ENCODE measurements at regions of chr11 and their contacts with region 1.

Region 1: DNA sequence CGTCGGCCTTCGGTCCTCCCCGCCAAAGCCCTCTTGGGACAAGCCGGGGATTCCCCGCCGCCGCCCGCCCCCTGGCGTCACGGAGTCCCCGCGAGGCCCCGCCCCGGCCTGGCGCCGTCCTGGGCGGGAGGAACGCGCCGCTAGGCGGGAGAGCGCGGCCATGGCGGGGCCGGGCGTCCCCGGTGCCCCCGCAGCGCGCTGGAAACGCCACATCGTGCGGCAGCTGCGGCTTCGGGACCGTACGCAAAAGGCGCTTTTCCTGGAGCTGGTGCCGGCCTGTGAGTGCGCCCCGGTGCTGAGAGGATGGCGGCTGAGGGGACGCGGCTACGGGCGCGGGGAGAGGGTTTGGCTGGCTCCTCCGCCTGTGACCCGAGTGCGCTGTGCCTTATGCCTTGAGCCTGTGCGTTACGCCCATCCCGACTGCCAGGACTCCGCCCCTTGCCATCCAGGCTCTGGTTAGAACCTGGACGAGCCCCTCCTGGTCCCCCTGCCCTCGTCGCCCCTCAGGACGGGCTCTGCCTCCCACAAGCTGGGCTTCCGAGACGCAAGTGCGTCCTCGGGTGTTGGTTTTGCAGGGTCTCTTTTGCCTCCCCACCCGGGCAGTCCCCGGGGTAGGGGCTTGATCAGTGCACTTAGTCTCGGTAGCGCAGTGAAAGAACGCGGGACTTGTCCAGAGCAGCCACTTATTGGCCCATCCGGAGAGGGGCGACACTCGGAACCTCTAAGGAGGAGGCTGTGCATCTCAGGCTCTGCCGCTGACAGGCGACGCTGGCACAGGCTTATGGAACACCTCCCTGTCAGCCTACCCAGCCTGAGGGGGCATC is at the start of gene ATG16L2:
- DNase-seq: peak in 8 of 9 donors; percentile 53 to 96 (median 92)
- ATAC-seq: peak; percentile 89
- H3K4me3 ChIP-seq: peak within 1 kb of the TSS; percentile 89
- H3K4me3 Mint-ChIP-seq: peak within 1 kb of the TSS; percentile 97 to 99 (median 98)
- H3K27ac ChIP-seq: peak within 1 kb of the TSS; percentile 100
- H3K27ac Mint-ChIP-seq: peak within 1 kb of the TSS; percentile 86 to 99 (median 98)
- H3K4me1 ChIP-seq: peaks cover 18 to 23% of the 10 kb centered on the region in 2 donors
- H3K4me1 Mint-ChIP-seq: peaks cover 31 to 67% (median 52%) of the 10 kb centered on the region in 7 donors
- H3K27me3 ChIP-seq: no peaks in the 10 kb centered on the region
- H3K27me3 Mint-ChIP-seq: no peaks in the 10 kb centered on the region
- total RNA-seq, gene ATG16L2: 99.5 to 199 (median 166) TPM

Region 2: DNA sequence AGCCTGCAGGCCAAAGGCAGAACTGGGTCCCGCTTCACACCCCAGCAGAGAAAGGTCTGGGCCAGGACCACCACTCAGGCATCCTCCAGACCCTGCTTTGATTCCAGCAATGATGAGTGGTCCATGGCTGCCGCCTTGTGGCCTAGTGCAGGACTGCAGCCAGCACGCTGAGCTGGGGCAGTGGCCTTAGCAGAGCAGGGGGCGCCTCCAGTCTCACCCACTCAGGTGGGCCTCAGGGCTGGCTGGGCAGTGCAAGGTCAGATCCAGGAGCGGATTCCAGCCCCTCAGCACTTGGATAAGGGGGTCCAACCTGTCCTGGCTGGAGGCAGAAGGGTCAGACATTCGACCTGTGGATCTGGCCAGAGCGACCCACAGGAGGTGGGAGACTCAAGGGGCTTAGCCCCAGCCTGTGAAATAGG is 130.7 kb before region 1 on chr11:
- CTCF ChIA-PET with region 1: no interaction called
- POLR2A ChIA-PET with region 1: no interaction called
- intact Hi-C with region 1: loop called in 1 of 2 experiments (anchors 2 kb)
- DNase-seq: peak; percentile 36 to 75 (median 56)
- ATAC-seq: peak; percentile 77
- H3K4me3 ChIP-seq: no peak overlapping the region
- H3K4me3 Mint-ChIP-seq: no peak overlapping the region
- H3K27ac ChIP-seq: no peak overlapping the region
- H3K27ac Mint-ChIP-seq: peak overlapping the region in 3 of 9 donors; percentile 59 to 74 (median 61)
- H3K4me1 ChIP-seq: no peaks in the 10 kb centered on the region
- H3K4me1 Mint-ChIP-seq: peaks cover 7 to 46% (median 16%) of the 10 kb centered on the region in 7 donors
- H3K27me3 ChIP-seq: no peaks in the 10 kb centered on the region
- H3K27me3 Mint-ChIP-seq: peaks cover 0 to 11% (median 0%) of the 10 kb centered on the region in 5 donors

Region 3: GRCh38 chr11:72781313-72782050 is 33.0 kb before region 1 on chr11:
- CTCF ChIA-PET with region 1: interaction called, 3 read pairs
- POLR2A ChIA-PET with region 1: interaction called, 3 read pairs
- intact Hi-C with region 1: loop called (anchors 1 kb)
- DNase-seq: peak; percentile 39 to 68 (median 49)
- ATAC-seq: peak; percentile 92
- H3K4me3 ChIP-seq: peak overlapping the region; percentile 52
- H3K4me3 Mint-ChIP-seq: peak overlapping the region; percentile 73 to 89 (median 84)
- H3K27ac ChIP-seq: peak overlapping the region; percentile 71
- H3K27ac Mint-ChIP-seq: peak overlapping the region in 8 of 9 donors; percentile 11 to 84 (median 68)
- H3K4me1 ChIP-seq: peaks cover 7 to 14% of the 10 kb centered on the region in 2 donors
- H3K4me1 Mint-ChIP-seq: peaks cover 23 to 34% (median 27%) of the 10 kb centered on the region in 7 donors
- H3K27me3 ChIP-seq: no peaks in the 10 kb centered on the region
- H3K27me3 Mint-ChIP-seq: peaks cover 0 to 6% (median 0%) of the 10 kb centered on the region in 5 donors